Posterior vena cava (tissue), 2 donors: ENCODE measurements at regions of chr12 and their contacts with region 1.

Region 1: GRCh38 chr12:3587402-3588013 is 96.5 kb downstream of the PRMT8 start:
- DNase-seq: no peak

Region 2: DNA sequence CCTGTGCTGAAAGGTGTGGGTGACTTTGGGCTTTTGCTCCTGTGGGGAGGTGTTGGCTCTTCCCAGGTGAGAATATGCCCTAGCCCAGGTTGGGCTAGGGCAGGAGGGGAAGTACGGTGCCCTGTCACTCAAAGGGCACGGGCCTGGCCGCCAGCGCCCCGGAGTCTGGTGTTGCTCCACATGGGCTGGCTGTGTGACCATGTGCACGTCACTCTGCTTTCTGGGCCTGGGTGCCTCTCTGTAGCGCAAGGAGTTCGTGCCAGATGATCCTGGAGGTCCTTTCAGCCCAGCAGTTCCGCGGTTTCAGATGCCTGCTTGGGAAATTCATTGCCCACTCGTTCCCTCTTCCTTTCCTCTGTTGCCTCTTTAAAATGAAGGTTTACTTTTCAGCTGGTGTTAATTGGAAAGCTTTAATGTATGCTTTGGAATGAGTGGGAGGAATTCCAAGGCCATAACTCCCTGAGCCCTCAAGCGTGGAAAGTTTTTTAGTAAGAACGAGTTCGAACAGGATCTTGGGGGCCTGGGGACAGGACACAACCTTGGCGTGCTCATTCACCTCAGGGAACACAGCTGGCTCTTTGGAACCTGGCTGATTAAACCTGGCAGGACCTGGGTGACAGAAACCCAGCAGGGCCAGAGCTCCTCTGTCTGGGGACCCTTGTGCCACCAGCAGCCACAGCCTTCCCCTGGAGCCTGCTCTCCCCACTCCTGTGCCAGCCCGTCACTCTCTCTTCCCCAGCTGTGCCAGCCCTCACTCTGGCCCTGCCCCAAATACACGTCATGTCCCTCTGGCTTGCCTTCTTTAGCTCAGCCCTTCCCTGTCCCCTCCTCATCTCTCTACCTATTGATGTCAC is 467.5 kb before region 1 on chr12:
- intact Hi-C with region 1: loop called in 1 of 2 experiments (anchors 10 kb)
- DNase-seq: no peak